ENCODE measurements at regions of chr13 and their contacts with region 1.

Region 1: GRCh38 chr13:75231235-75231634 is 250.7 kb downstream of the TBC1D4 start:
- DNase-seq: no peak
- H3K4me3 ChIP-seq: no peak overlapping the region
- H3K4me3 Mint-ChIP-seq: no peak overlapping the region
- H3K27ac ChIP-seq: no peak overlapping the region
- H3K27ac Mint-ChIP-seq: no peak overlapping the region
- H3K4me1 ChIP-seq: no peaks in the 10 kb centered on the region
- H3K4me1 Mint-ChIP-seq: no peaks in the 10 kb centered on the region
- H3K27me3 ChIP-seq: no peaks in the 10 kb centered on the region
- H3K27me3 Mint-ChIP-seq: peaks cover 4% of the 10 kb centered on the region in 2 donors

Region 2: GRCh38 chr13:75145927-75146326 is 85.3 kb before region 1 on chr13:
- CTCF ChIA-PET with region 1: no interaction called
- POLR2A ChIA-PET with region 1: no interaction called
- DNase-seq: no peak
- H3K4me3 ChIP-seq: no peak overlapping the region
- H3K4me3 Mint-ChIP-seq: no peak overlapping the region
- H3K27ac ChIP-seq: no peak overlapping the region
- H3K27ac Mint-ChIP-seq: no peak overlapping the region
- H3K4me1 ChIP-seq: no peaks in the 10 kb centered on the region
- H3K4me1 Mint-ChIP-seq: no peaks in the 10 kb centered on the region
- H3K27me3 ChIP-seq: no peaks in the 10 kb centered on the region
- H3K27me3 Mint-ChIP-seq: peaks cover 7 to 26% of the 10 kb centered on the region in 2 donors

Region 3: GRCh38 chr13:75219479-75220237 is 11.6 kb before region 1 on chr13:
- CTCF ChIA-PET with region 1: interaction called, 12 read pairs
- POLR2A ChIA-PET with region 1: no interaction called
- DNase-seq: peak; percentile 64 to 79 (median 73)
- H3K4me3 ChIP-seq: no peak overlapping the region
- H3K4me3 Mint-ChIP-seq: peak overlapping the region in 5 of 7 donors; percentile 46 to 66 (median 56)
- H3K27ac ChIP-seq: no peak overlapping the region
- H3K27ac Mint-ChIP-seq: peak overlapping the region in 1 of 8 donors; percentile 8
- H3K4me1 ChIP-seq: no peaks in the 10 kb centered on the region
- H3K4me1 Mint-ChIP-seq: peaks cover 6 to 8% (median 6%) of the 10 kb centered on the region in 3 donors
- H3K27me3 ChIP-seq: no peaks in the 10 kb centered on the region
- H3K27me3 Mint-ChIP-seq: peaks cover 19 to 38% of the 10 kb centered on the region in 2 donors